ENCODE measurements at regions of chr2 and their contacts with region 1.

Region 1: DNA sequence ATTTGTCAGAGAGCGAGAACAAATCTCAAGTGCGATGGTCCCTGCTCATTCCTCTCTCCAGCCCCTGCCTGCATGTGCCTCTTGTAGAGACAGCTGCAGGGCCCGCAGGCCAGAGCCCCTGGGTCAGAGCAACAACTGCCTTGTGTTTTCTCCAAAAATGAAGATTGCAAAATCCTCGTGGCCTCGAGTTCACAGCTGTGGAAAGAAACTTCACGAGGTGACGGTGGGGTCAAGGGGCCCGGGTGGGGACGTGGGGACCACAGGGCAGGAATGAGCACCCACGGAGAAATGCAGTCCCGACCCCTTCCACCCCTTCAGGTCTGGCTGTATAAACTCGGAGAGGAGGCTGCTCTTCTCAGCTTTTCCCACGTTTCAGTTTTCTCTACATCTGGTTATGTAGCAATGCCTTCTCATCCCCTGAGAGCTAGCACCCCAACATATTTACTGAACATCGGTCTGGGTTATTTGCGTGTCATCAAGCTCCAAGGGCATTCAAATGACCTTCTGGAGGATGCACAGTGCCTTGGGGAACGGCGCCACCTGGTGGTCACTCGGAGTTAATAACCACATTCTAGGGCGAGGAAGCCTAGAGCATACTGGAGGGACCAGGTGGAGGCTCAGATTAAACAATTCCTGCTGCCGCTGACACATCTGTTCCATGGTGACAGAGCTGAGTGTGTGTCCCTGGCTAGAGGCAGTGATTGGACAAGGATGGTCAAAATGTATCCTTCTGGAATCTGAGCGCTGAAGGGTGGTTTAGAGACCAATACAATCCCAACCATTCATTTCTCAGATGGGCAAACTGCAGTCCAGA is 91.4 kb upstream of the CYRIA start:
- DNase-seq: peak; percentile 62
- ATAC-seq: peak; percentile 57
- H3K4me3 ChIP-seq: no peak overlapping the region
- H3K27ac ChIP-seq: no peak overlapping the region
- H3K4me1 ChIP-seq: no peaks in the 10 kb centered on the region
- H3K27me3 ChIP-seq: peaks cover 21% of the 10 kb centered on the region
- CTCF ChIP-seq: peak; percentile 91

Region 2: DNA sequence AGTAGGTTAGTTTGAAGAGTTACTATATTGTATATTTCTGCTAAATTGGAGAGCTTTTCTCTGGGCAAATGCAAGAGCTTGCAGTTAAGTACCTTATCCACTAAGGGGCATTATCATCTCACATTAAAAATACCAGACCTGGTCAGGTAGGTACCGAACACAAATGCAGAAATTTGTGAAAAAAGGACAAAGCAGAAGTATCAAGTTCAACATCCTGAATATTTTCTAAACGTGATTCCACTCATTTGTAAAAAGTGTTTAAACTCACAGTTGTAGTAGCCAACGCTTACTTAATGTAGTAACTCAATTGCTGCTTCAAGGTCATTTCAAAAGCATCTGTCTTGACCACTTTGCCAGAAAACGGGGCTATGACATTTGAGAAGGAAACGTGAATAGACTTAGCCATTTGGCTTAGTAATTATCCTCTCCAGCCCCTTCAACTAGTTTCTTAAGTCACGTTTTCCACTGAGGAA is 143.5 kb before region 1 on chr2:
- CTCF ChIA-PET with region 1: no interaction called
- POLR2A ChIA-PET with region 1: no interaction called
- intact Hi-C with region 1: loop called (anchors 5 kb)
- DNase-seq: peak; percentile 29
- ATAC-seq: no peak
- H3K4me3 ChIP-seq: no peak overlapping the region
- H3K27ac ChIP-seq: no peak overlapping the region
- H3K4me1 ChIP-seq: no peaks in the 10 kb centered on the region; the same call in 1 of the 2 replicates
- H3K27me3 ChIP-seq: peaks cover 6% of the 10 kb centered on the region; the same call in 1 of the 2 replicates
- CTCF ChIP-seq: peak; percentile 65

Measured in PC-3 (cell line).